IMR-90 (cell line): ENCODE measurements at regions of chr19 and their contacts with region 1.

Region 1: GRCh38 chr19:13588957-13589833 is 82.9 kb upstream of the CACNA1A start:
- DNase-seq: peak; percentile 41
- ATAC-seq: peak; percentile 100
- H3K4me3 ChIP-seq: no peak overlapping the region
- H3K27ac ChIP-seq: no peak overlapping the region
- H3K4me1 ChIP-seq: no peaks in the 10 kb centered on the region
- H3K27me3 ChIP-seq: peaks cover 5% of the 10 kb centered on the region
- CTCF ChIP-seq: peak; percentile 94
- POLR2A ChIP-seq: no peak
- RAD21 ChIP-seq: peak; percentile 88

Region 2: GRCh38 chr19:13303381-13304129 is 285.6 kb before region 1 on chr19:
- CTCF ChIA-PET with region 1: no interaction called
- POLR2A ChIA-PET with region 1: interaction called, 17 read pairs
- dilution Hi-C with region 1: no loop called
- in situ Hi-C with region 1: no loop called
- intact Hi-C with region 1: no loop called
- DNase-seq: no peak
- ATAC-seq: no peak
- H3K4me3 ChIP-seq: no peak overlapping the region
- H3K27ac ChIP-seq: no peak overlapping the region
- H3K4me1 ChIP-seq: no peaks in the 10 kb centered on the region
- H3K27me3 ChIP-seq: no peaks in the 10 kb centered on the region
- CTCF ChIP-seq: no peak
- POLR2A ChIP-seq: no peak
- RAD21 ChIP-seq: no peak

Region 3: GRCh38 chr19:13430790-13431582 is 158.2 kb before region 1 on chr19:
- CTCF ChIA-PET with region 1: interaction called, 4 read pairs
- POLR2A ChIA-PET with region 1: no interaction called
- dilution Hi-C with region 1: no loop called
- in situ Hi-C with region 1: no loop called
- intact Hi-C with region 1: loop called (anchors 1 kb)
- DNase-seq: peak; percentile 42
- ATAC-seq: peak; percentile 91
- H3K4me3 ChIP-seq: no peak overlapping the region
- H3K27ac ChIP-seq: no peak overlapping the region
- H3K4me1 ChIP-seq: no peaks in the 10 kb centered on the region
- H3K27me3 ChIP-seq: no peaks in the 10 kb centered on the region
- CTCF ChIP-seq: peak; percentile 78
- POLR2A ChIP-seq: no peak
- RAD21 ChIP-seq: peak; percentile 80